CD8-positive, alpha-beta T cell (primary cell): ENCODE measurements at regions of chr10 and their contacts with region 1.

Region 1: GRCh38 chr10:103367782-103368518 is at the start of gene TAF5:
- DNase-seq: peak; percentile 77 to 97 (median 90)
- ATAC-seq: peak; percentile 66
- H3K4me3 ChIP-seq: peak within 1 kb of the TSS; percentile 57 to 93
- H3K4me3 Mint-ChIP-seq: peak within 1 kb of the TSS; percentile 91
- H3K27ac ChIP-seq: peak within 1 kb of the TSS; percentile 70 to 72
- H3K27ac Mint-ChIP-seq: peak within 1 kb of the TSS; percentile 91
- H3K4me1 ChIP-seq: peaks cover 12% of the 10 kb centered on the region
- H3K4me1 Mint-ChIP-seq: peaks cover 24% of the 10 kb centered on the region
- H3K27me3 ChIP-seq: no peaks in the 10 kb centered on the region
- H3K27me3 Mint-ChIP-seq: no peaks in the 10 kb centered on the region
- CTCF ChIP-seq: no peak
- total RNA-seq, gene TAF5: 3.2 to 4.0 TPM

Region 2: GRCh38 chr10:102055647-102056419 is 1312.1 kb before region 1 on chr10 and contains the start of gene ARMH3:
- CTCF ChIA-PET with region 1: no interaction called
- POLR2A ChIA-PET with region 1: no interaction called
- intact Hi-C with region 1: loop called in 1 of 2 experiments (anchors 5 kb)
- DNase-seq: peak; percentile 75 to 95 (median 87)
- ATAC-seq: peak; percentile 93
- H3K4me3 ChIP-seq: peak within 1 kb of the TSS; percentile 93 to 94
- H3K4me3 Mint-ChIP-seq: peak within 1 kb of the TSS; percentile 97
- H3K27ac ChIP-seq: peak within 1 kb of the TSS; percentile 79 to 90
- H3K27ac Mint-ChIP-seq: peak within 1 kb of the TSS; percentile 95
- H3K4me1 ChIP-seq: peaks cover 40% of the 10 kb centered on the region
- H3K4me1 Mint-ChIP-seq: peaks cover 42% of the 10 kb centered on the region
- H3K27me3 ChIP-seq: no peaks in the 10 kb centered on the region
- H3K27me3 Mint-ChIP-seq: no peaks in the 10 kb centered on the region
- CTCF ChIP-seq: no peak
- total RNA-seq, gene ARMH3: 18.6 to 20.6 TPM

Region 3: GRCh38 chr10:102245101-102245931 is 1122.6 kb before region 1 on chr10 and contains the start of gene GBF1:
- CTCF ChIA-PET with region 1: no interaction called
- POLR2A ChIA-PET with region 1: no interaction called
- intact Hi-C with region 1: loop called in 1 of 2 experiments (anchors 10 kb)
- DNase-seq: peak; percentile 75 to 98 (median 87)
- ATAC-seq: peak; percentile 84
- H3K4me3 ChIP-seq: peak within 1 kb of the TSS; percentile 82 to 95
- H3K4me3 Mint-ChIP-seq: peak within 1 kb of the TSS; percentile 94
- H3K27ac ChIP-seq: peak within 1 kb of the TSS; percentile 89 to 93
- H3K27ac Mint-ChIP-seq: peak within 1 kb of the TSS; percentile 92
- H3K4me1 ChIP-seq: peaks cover 44% of the 10 kb centered on the region
- H3K4me1 Mint-ChIP-seq: peaks cover 54% of the 10 kb centered on the region
- H3K27me3 ChIP-seq: peaks cover 10 to 22% of the 10 kb centered on the region in 2 experiments
- H3K27me3 Mint-ChIP-seq: peaks cover 19% of the 10 kb centered on the region
- CTCF ChIP-seq: no peak
- total RNA-seq, gene GBF1: 26.7 to 31.3 TPM

Region 4: DNA sequence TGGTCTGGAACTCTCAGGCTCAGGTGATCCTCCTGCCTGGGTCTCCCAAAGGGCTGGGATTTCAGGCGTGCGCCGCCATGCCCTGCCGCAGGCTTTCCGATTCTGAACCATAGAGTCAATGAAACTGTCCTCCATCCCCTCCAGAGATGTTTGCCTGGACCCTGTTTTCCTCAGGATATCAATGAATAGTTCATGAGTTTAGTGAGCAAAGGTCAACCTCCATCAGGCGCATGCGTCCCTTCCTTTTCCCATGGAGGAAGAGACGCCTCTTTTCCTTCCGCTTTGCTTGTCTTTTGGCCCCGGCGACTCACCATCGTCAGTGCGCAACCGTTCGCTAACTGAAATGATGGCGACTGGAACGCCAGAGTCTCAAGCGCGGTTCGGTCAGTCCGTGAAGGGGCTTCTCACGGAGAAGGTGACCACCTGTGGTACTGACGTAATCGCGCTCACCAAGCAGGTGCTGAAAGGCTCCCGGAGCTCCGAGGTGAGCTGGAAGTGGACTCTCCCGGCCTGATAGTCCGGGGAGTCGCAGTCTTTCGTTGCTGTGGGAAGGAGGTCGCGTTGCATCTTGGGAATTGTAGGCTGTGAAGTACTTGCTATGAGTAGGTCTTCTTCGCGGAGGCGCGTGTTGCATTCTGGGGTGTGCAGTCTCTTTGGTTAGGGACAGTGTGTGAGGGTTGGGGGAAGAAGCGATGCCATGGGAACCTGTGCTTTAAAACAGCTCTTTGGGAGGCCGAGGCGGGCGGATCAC is 513.8 kb before region 1 on chr10 and contains the start of gene BORCS7:
- CTCF ChIA-PET with region 1: no interaction called
- POLR2A ChIA-PET with region 1: interaction called, 3 read pairs
- intact Hi-C with region 1: loop called in 1 of 2 experiments (anchors 10 kb)
- DNase-seq: peak; percentile 68 to 95 (median 87)
- ATAC-seq: peak; percentile 99
- H3K4me3 ChIP-seq: peak within 1 kb of the TSS; percentile 99
- H3K4me3 Mint-ChIP-seq: peak within 1 kb of the TSS; percentile 99
- H3K27ac ChIP-seq: peak within 1 kb of the TSS; percentile 90 to 98
- H3K27ac Mint-ChIP-seq: peak within 1 kb of the TSS; percentile 99
- H3K4me1 ChIP-seq: peaks cover 5% of the 10 kb centered on the region
- H3K4me1 Mint-ChIP-seq: peaks cover 17% of the 10 kb centered on the region
- H3K27me3 ChIP-seq: no peaks in the 10 kb centered on the region
- H3K27me3 Mint-ChIP-seq: no peaks in the 10 kb centered on the region
- CTCF ChIP-seq: no peak
- total RNA-seq, gene BORCS7: 13.7 to 13.9 TPM

Region 5: GRCh38 chr10:103350501-103351260 is 17.3 kb before region 1 on chr10 and contains the start of gene PCGF6:
- CTCF ChIA-PET with region 1: interaction called, 4 read pairs
- POLR2A ChIA-PET with region 1: interaction called, 17 read pairs
- intact Hi-C with region 1: loop called (anchors 1 kb)
- DNase-seq: peak; percentile 31 to 85 (median 70)
- ATAC-seq: peak; percentile 86
- H3K4me3 ChIP-seq: peak within 1 kb of the TSS; percentile 69 to 80
- H3K4me3 Mint-ChIP-seq: peak within 1 kb of the TSS; percentile 88
- H3K27ac ChIP-seq: peak within 1 kb of the TSS; percentile 34 to 46
- H3K27ac Mint-ChIP-seq: peak within 1 kb of the TSS; percentile 88
- H3K4me1 ChIP-seq: peaks cover 5% of the 10 kb centered on the region
- H3K4me1 Mint-ChIP-seq: peaks cover 14% of the 10 kb centered on the region
- H3K27me3 ChIP-seq: no peaks in the 10 kb centered on the region
- H3K27me3 Mint-ChIP-seq: no peaks in the 10 kb centered on the region
- CTCF ChIP-seq: no peak
- total RNA-seq, gene PCGF6: 1.7 to 2.1 TPM

Region 6: DNA sequence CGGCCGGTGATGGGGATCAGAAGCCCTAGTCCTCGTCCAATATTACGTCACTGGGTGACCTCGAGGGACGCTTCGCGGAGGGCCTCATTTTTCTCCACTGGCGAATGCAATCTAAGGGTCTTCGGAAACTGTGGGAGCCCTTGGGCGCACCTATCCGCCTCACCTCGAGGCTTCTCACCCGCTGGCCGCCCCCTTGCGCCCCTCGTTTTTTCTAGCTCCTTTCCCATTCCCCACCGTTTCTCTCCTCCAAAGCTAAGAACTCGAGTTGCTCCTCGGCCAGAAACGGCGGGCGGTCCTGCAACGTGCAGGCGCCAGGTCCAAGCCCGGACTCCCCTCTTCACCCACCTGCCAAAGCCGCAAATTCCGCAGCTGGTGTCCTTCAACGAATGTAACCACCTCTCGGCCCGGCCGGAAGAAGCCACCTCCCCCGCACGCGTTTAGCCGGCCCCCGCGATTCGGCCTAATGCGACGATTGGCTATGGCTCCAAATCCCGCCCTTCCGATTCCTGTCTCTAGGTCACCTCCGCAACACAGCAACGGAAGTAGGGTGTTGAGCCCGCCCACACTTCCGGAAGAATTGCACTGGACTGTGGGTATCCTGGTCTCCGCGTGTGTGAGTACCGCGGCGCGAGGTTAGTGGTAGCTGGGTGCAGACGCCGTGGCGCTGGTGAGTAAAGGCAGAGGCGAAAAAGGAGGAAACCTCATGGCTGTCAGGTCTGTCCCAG is 28.3 kb after region 1 on chr10 and contains the starts of genes ATP5MK and PDCD11:
- CTCF ChIA-PET with region 1: interaction called, 7 read pairs
- POLR2A ChIA-PET with region 1: no interaction called
- intact Hi-C with region 1: loop called (anchors 1 kb)
- DNase-seq: peak; percentile 86 to 97 (median 94)
- ATAC-seq: peak; percentile 97
- H3K4me3 ChIP-seq: peak within 1 kb of the TSS; percentile 88 to 99
- H3K4me3 Mint-ChIP-seq: peak within 1 kb of the TSS; percentile 97
- H3K27ac ChIP-seq: peak within 1 kb of the TSS; percentile 66 to 69
- H3K27ac Mint-ChIP-seq: peak within 1 kb of the TSS; percentile 96
- H3K4me1 ChIP-seq: peaks cover 39% of the 10 kb centered on the region
- H3K4me1 Mint-ChIP-seq: peaks cover 64% of the 10 kb centered on the region
- H3K27me3 ChIP-seq: no peaks in the 10 kb centered on the region
- H3K27me3 Mint-ChIP-seq: no peaks in the 10 kb centered on the region
- CTCF ChIP-seq: no peak
- total RNA-seq, gene ATP5MK: 93.4 to 97.3 TPM
- total RNA-seq, gene PDCD11: 13.7 to 15.0 TPM

Region 7: GRCh38 chr10:103470761-103471653 is 103.1 kb after region 1 on chr10:
- CTCF ChIA-PET with region 1: no interaction called
- POLR2A ChIA-PET with region 1: no interaction called
- intact Hi-C with region 1: loop called in 1 of 2 experiments (anchors 5 kb)
- DNase-seq: peak; percentile 36 to 90 (median 79)
- ATAC-seq: peak; percentile 91
- H3K4me3 ChIP-seq: peak overlapping the region; percentile 19 to 27
- H3K4me3 Mint-ChIP-seq: peak overlapping the region; percentile 71
- H3K27ac ChIP-seq: peak overlapping the region; percentile 26 to 87
- H3K27ac Mint-ChIP-seq: peak overlapping the region; percentile 91
- H3K4me1 ChIP-seq: peaks cover 28% of the 10 kb centered on the region
- H3K4me1 Mint-ChIP-seq: peaks cover 38% of the 10 kb centered on the region
- H3K27me3 ChIP-seq: no peaks in the 10 kb centered on the region
- H3K27me3 Mint-ChIP-seq: no peaks in the 10 kb centered on the region
- CTCF ChIP-seq: no peak

Region 8: GRCh38 chr10:103966671-103967447 is 598.9 kb after region 1 on chr10 and contains the start of gene SLK:
- CTCF ChIA-PET with region 1: no interaction called
- POLR2A ChIA-PET with region 1: no interaction called
- intact Hi-C with region 1: no loop called
- DNase-seq: peak; percentile 72 to 95 (median 84)
- ATAC-seq: peak; percentile 83
- H3K4me3 ChIP-seq: peak within 1 kb of the TSS; percentile 96 to 97
- H3K4me3 Mint-ChIP-seq: peak within 1 kb of the TSS; percentile 96
- H3K27ac ChIP-seq: peak within 1 kb of the TSS; percentile 83 to 86
- H3K27ac Mint-ChIP-seq: peak within 1 kb of the TSS; percentile 89
- H3K4me1 ChIP-seq: peaks cover 14% of the 10 kb centered on the region
- H3K4me1 Mint-ChIP-seq: peaks cover 44% of the 10 kb centered on the region
- H3K27me3 ChIP-seq: no peaks in the 10 kb centered on the region
- H3K27me3 Mint-ChIP-seq: no peaks in the 10 kb centered on the region
- CTCF ChIP-seq: no peak
- total RNA-seq, gene SLK: 23.8 to 24.6 TPM